A673 (cell line): ENCODE measurements at regions of chr6 and their contacts with region 1.

Region 1: GRCh38 chr6:3561725-3562124 is 104.9 kb upstream of the SLC22A23 start:
- DNase-seq: peak; percentile 39
- H3K4me3 ChIP-seq: no peak overlapping the region
- H3K27ac ChIP-seq: no peak overlapping the region
- H3K4me1 ChIP-seq: no peaks in the 10 kb centered on the region
- H3K27me3 ChIP-seq: no peaks in the 10 kb centered on the region
- CTCF ChIP-seq: peak; percentile 18; the same call in 1 of the 2 replicates

Region 2: GRCh38 chr6:2799936-2800527 is 761.7 kb before region 1 on chr6:
- CTCF ChIA-PET with region 1: no interaction called
- POLR2A ChIA-PET with region 1: no interaction called
- intact Hi-C with region 1: no loop called
- DNase-seq: peak; percentile 92
- H3K4me3 ChIP-seq: no peak overlapping the region
- H3K27ac ChIP-seq: peak overlapping the region; percentile 78
- H3K4me1 ChIP-seq: peaks cover 29% of the 10 kb centered on the region
- H3K27me3 ChIP-seq: no peaks in the 10 kb centered on the region
- CTCF ChIP-seq: no peak

Region 3: DNA sequence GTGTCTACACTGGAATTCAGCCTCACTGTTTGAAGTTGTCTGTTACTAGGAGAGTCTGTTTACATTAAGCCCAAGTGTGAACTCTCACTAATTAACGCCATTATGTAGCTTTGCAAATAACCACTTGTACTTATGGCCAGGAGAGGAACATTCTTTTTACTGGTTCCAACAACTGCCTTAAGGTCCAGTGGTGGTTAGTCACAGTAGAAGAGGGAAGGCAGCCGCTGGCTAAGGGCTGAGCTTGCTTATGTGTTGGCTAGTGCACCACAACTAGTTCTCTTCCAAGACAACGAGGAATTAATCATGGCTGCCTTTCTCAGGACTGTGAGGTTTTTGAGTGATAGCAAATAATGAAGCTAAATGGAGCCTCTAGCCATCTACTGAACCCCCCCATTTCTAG is 90.0 kb before region 1 on chr6:
- CTCF ChIA-PET with region 1: interaction called, 14 read pairs
- POLR2A ChIA-PET with region 1: no interaction called
- intact Hi-C with region 1: no loop called
- DNase-seq: no peak
- H3K4me3 ChIP-seq: no peak overlapping the region
- H3K27ac ChIP-seq: no peak overlapping the region
- H3K4me1 ChIP-seq: peaks cover 14% of the 10 kb centered on the region
- H3K27me3 ChIP-seq: no peaks in the 10 kb centered on the region
- CTCF ChIP-seq: no peak

Region 4: GRCh38 chr6:3592371-3592941 is 30.7 kb after region 1 on chr6:
- CTCF ChIA-PET with region 1: no interaction called
- POLR2A ChIA-PET with region 1: no interaction called
- intact Hi-C with region 1: no loop called
- DNase-seq: peak; percentile 17
- H3K4me3 ChIP-seq: no peak overlapping the region
- H3K27ac ChIP-seq: no peak overlapping the region
- H3K4me1 ChIP-seq: peaks cover 3% of the 10 kb centered on the region
- H3K27me3 ChIP-seq: no peaks in the 10 kb centered on the region
- CTCF ChIP-seq: no peak